ENCODE measurements at regions of chr11 and their contacts with region 1.

Region 1: DNA sequence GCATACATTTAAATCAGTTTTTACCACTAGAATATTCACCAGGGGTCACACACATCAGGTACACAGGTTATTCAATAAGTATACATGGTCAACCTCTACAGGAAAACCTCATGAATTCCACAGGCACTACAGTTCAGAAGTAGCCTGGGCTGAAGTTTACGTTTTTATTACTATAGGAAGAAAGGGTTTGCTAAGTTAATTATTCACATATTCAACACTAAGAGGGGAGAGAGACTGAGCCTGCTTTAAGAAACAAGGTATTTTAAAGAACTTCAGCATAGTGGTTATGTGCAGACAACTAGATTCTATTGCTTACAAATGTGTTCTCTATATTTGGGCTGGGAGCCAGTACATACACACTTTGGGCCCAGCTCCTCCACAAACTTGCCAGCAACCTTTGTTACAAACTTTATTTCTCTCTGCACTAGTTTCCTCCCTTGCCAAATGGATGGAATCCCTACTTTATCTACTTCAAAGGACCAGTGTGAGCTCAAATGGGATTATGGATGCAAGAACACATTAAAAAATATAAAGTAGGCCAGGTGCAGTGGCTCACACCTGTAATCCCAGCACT is 31.9 kb downstream of the IL18BP start:
- DNase-seq: no peak
- ATAC-seq: no peak
- H3K4me3 ChIP-seq: no peak overlapping the region
- H3K27ac ChIP-seq: no peak overlapping the region
- H3K4me1 ChIP-seq: no peaks in the 10 kb centered on the region
- H3K27me3 ChIP-seq: no peaks in the 10 kb centered on the region
- CTCF ChIP-seq: no peak
- EP300 ChIP-seq: no peak
- POLR2A ChIP-seq: no peak
- RAD21 ChIP-seq: no peak

Region 2: GRCh38 chr11:72069787-72070251 is 39.3 kb after region 1 on chr11:
- CTCF ChIA-PET with region 1: interaction called, 27 read pairs
- POLR2A ChIA-PET with region 1: no interaction called
- RAD21 ChIA-PET with region 1: interaction called, 8 read pairs
- SMC1A ChIA-PET with region 1: interaction called, 6 read pairs
- in situ Hi-C with region 1: no loop called
- intact Hi-C with region 1: no loop called
- DNase-seq: no peak
- ATAC-seq: peak; percentile 92
- H3K4me3 ChIP-seq: peak overlapping the region; percentile 59; the same call in 1 of the 2 replicates
- H3K27ac ChIP-seq: peak overlapping the region; percentile 63
- H3K4me1 ChIP-seq: peaks cover 27% of the 10 kb centered on the region
- H3K27me3 ChIP-seq: no peaks in the 10 kb centered on the region
- CTCF ChIP-seq: no peak
- EP300 ChIP-seq: no peak
- POLR2A ChIP-seq: no peak
- RAD21 ChIP-seq: no peak

Region 3: DNA sequence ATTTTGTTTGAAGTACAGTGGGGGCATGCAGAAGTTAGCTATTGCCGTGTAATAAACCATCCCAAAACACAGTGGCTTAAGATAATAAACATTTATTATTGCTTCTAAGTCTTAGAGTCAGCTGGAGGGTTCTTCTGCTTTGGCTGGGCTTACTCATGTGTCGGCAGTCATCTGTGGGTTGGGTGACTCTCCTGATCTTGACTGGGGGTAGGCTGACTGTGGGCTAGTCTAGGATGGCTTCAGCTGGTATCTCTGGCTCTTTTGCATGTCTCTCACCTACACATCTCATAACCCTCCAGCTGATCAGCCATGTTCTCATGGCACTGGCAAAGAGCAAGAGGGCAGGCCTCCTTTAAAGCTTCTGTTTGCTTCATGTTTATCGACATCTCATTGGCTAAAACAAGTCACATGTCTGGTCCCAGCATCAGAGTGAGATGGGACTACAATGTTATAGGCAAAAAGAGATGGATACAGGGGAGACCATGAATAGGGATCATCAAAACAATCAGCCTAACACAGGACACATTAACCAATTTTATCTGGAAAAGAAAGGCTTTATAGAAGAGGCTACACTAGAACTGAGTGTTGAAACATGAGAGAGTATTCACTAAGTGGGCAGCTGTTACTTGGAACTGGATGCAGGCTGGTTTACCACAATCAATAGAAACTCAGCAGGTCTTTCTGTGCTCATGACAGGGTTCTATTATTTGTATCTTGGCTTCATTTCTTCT is 55.2 kb after region 1 on chr11:
- CTCF ChIA-PET with region 1: interaction called, 416 read pairs
- POLR2A ChIA-PET with region 1: interaction called, 14 read pairs
- RAD21 ChIA-PET with region 1: interaction called, 112 read pairs
- SMC1A ChIA-PET with region 1: interaction called, 245 read pairs
- in situ Hi-C with region 1: no loop called
- intact Hi-C with region 1: no loop called
- DNase-seq: no peak
- ATAC-seq: no peak
- H3K4me3 ChIP-seq: no peak overlapping the region
- H3K27ac ChIP-seq: no peak overlapping the region
- H3K4me1 ChIP-seq: peaks cover 10% of the 10 kb centered on the region
- H3K27me3 ChIP-seq: no peaks in the 10 kb centered on the region
- CTCF ChIP-seq: no peak
- EP300 ChIP-seq: no peak
- POLR2A ChIP-seq: no peak
- RAD21 ChIP-seq: no peak

Region 4: GRCh38 chr11:72141066-72141465 is 110.5 kb after region 1 on chr11:
- CTCF ChIA-PET with region 1: interaction called, 101 read pairs
- POLR2A ChIA-PET with region 1: interaction called, 4 read pairs
- RAD21 ChIA-PET with region 1: interaction called, 48 read pairs
- SMC1A ChIA-PET with region 1: interaction called, 44 read pairs
- in situ Hi-C with region 1: no loop called
- intact Hi-C with region 1: loop called (anchors 1 kb)
- DNase-seq: no peak
- ATAC-seq: no peak
- H3K4me3 ChIP-seq: no peak overlapping the region
- H3K27ac ChIP-seq: no peak overlapping the region
- H3K4me1 ChIP-seq: no peaks in the 10 kb centered on the region
- H3K27me3 ChIP-seq: no peaks in the 10 kb centered on the region; a peak in 1 of 4 replicates
- CTCF ChIP-seq: no peak
- EP300 ChIP-seq: no peak
- POLR2A ChIP-seq: no peak
- RAD21 ChIP-seq: no peak

Region 5: DNA sequence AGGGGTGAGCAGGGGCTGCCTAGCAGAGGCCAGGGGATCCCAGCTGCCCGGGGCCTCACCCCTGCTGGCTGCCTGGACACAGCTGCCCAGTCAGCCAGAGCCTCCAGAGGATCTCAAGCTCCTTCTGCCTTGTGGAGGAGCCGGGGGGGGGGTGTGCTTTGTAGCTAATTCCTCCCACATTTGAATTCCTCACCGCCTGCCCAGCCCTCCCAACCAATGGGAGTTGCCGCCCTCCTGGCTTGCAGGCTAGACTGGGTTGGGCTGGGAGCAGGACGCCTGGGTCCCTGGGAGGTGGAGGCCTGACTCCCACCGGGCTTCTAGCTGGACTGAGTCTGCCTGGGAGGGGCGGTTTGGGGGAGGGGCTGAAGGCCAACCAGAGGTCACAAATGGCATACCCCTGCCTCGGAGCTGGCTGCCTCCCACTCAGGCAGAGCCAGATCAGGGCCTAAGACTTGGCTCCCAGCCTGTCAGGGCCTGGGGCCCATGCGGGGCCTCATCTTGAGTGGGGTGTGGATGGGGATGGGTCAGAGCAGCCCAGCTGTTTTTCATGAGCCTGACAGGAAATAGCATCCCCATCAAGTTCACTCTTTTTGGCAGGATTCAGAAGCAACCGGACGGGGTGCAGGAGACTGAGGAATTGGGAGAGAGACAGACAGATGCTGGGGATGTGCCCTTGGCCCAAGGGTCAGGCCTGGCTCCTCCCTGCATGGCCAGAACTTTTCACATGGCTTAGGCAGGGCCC is 672.9 kb after region 1 on chr11:
- CTCF ChIA-PET with region 1: no interaction called
- POLR2A ChIA-PET with region 1: no interaction called
- RAD21 ChIA-PET with region 1: no interaction called
- SMC1A ChIA-PET with region 1: no interaction called
- in situ Hi-C with region 1: no loop called
- intact Hi-C with region 1: no loop called
- DNase-seq: no peak
- ATAC-seq: no peak
- H3K4me3 ChIP-seq: no peak overlapping the region
- H3K27ac ChIP-seq: no peak overlapping the region
- H3K4me1 ChIP-seq: peaks cover 8% of the 10 kb centered on the region
- H3K27me3 ChIP-seq: no peaks in the 10 kb centered on the region
- CTCF ChIP-seq: no peak
- EP300 ChIP-seq: no peak
- POLR2A ChIP-seq: no peak; the same call in 1 of the 2 replicates
- RAD21 ChIP-seq: no peak

Measured in GM12878 (cell line).